PC-3 (cell line): ENCODE measurements at regions of chr12 and their contacts with region 1.

Region 1: DNA sequence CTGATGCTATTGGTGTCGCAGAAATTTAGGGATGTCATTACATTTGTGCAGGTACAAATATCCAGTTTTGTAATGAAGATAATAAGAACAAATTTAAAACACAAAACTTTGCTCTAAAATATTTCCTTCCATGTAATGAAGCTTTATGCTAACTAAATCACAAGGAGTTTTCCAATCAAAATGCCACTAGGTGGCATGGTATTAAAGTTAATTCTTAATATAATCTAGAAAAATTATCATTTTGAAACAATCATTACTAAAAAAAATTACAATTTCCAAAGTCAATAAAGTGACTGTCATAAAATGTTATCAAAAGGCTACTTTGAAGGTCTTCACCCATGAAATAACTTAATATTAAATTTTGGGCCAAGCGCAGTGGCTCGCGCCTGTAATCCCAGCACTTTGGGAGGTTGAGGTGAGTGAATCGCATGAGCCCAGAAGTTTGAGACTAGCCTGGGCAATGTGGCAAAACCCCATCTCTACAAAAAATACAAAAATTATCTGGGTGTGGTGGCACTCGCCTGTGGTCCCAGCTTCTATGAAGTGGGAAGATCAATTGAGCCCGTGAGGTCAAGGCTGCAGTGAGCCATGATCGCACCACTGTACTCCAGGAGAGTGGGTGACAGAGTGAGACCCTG is 77.4 kb downstream of the KIF21A start:
- DNase-seq: no peak
- ATAC-seq: no peak
- H3K4me3 ChIP-seq: no peak overlapping the region
- H3K27ac ChIP-seq: no peak overlapping the region
- H3K4me1 ChIP-seq: peaks cover 24% of the 10 kb centered on the region
- H3K27me3 ChIP-seq: no peaks in the 10 kb centered on the region
- CTCF ChIP-seq: peak; percentile 56

Region 2: DNA sequence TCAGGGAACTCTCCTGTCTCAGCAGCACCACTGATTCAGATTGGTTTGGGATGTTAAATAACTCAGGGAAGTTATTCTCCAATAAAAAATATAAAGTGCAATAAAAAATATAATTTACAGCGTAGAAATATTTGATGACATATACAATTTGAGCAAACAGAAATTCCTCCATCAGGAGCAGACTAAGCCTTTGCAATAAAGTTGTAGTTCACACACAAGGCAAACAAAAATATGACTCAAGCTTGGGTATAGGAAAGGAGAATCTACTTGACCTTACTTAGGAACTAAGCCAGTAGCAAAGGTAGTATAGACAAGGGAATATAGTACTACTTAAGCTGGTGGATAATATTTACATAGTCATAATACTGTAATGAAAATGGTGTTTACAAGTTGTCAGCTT is 186.6 kb before region 1 on chr12:
- CTCF ChIA-PET with region 1: no interaction called
- POLR2A ChIA-PET with region 1: no interaction called
- intact Hi-C with region 1: loop called (anchors 1 kb)
- DNase-seq: peak; percentile 84
- ATAC-seq: peak; percentile 96
- H3K4me3 ChIP-seq: no peak overlapping the region
- H3K27ac ChIP-seq: peak overlapping the region; percentile 92
- H3K4me1 ChIP-seq: peaks cover 28% of the 10 kb centered on the region
- H3K27me3 ChIP-seq: no peaks in the 10 kb centered on the region
- CTCF ChIP-seq: no peak

Region 3: DNA sequence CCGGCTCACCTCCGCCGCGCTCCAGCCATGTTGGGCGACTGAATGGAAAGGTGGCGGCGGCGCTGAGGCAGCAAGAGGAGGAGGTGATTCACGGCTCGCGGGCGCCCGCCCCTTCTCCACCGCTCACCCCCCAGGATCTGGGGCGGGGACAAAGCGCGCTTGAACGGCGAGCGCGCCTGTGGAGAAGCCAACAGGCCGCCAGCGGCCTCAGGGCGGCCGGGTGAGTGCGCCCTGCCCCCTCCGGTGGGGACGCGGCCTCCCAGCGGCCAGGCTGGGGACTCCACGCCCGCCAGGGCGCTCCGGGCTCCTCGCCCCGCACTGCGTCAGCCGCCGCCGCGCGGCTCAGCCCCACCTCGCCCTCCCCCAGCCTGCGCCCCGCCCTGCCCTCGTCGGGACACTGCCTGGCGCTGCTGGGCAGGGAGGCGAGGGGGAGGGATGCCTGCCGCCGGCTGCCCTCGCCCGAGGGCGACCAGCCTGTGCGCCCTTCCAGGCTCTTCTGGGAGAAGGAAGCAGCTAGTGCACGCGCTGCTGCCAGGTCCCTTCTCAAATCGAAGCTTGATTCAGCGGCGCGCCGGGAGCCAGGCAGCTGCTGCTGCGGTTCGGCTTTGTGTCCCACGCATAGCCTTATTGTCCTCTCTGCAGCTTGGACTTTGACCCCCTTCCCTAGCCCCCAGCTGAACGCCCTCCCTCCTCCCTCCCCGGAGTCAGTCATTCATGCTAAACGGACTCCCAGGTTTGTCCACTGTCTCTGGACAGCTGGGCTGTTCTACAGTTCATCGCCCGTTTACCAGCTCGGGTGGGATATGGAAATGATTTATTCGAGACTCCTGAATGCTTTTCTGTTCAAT is 77.8 kb after region 1 on chr12 and contains the start of gene KIF21A:
- CTCF ChIA-PET with region 1: interaction called, 3 read pairs
- POLR2A ChIA-PET with region 1: no interaction called
- intact Hi-C with region 1: loop called (anchors 1 kb)
- DNase-seq: peak; percentile 97
- ATAC-seq: peak; percentile 90
- H3K4me3 ChIP-seq: peak within 1 kb of the TSS; percentile 81
- H3K27ac ChIP-seq: peak within 1 kb of the TSS; percentile 61
- H3K4me1 ChIP-seq: peaks cover 22% of the 10 kb centered on the region
- H3K27me3 ChIP-seq: no peaks in the 10 kb centered on the region
- CTCF ChIP-seq: no peak
- total RNA-seq, gene KIF21A: 21.7 and 25.1 TPM in 2 replicates

Region 4: GRCh38 chr12:39503445-39503844 is 138.0 kb after region 1 on chr12:
- CTCF ChIA-PET with region 1: no interaction called
- POLR2A ChIA-PET with region 1: no interaction called
- intact Hi-C with region 1: loop called (anchors 5 kb)
- DNase-seq: peak; percentile 84
- ATAC-seq: peak; percentile 77
- H3K4me3 ChIP-seq: no peak overlapping the region
- H3K27ac ChIP-seq: no peak overlapping the region
- H3K4me1 ChIP-seq: peaks cover 32% of the 10 kb centered on the region
- H3K27me3 ChIP-seq: no peaks in the 10 kb centered on the region
- CTCF ChIP-seq: peak; percentile 66

Region 5: GRCh38 chr12:39538679-39539104 is 173.2 kb after region 1 on chr12:
- CTCF ChIA-PET with region 1: no interaction called
- POLR2A ChIA-PET with region 1: no interaction called
- intact Hi-C with region 1: loop called (anchors 10 kb)
- DNase-seq: no peak
- ATAC-seq: no peak
- H3K4me3 ChIP-seq: no peak overlapping the region
- H3K27ac ChIP-seq: no peak overlapping the region
- H3K4me1 ChIP-seq: 0 out of 2 replicates have a peak, but pooled peaks cover 4% of the 10 kb centered on the region
- H3K27me3 ChIP-seq: no peaks in the 10 kb centered on the region
- CTCF ChIP-seq: no peak

Region 6: DNA sequence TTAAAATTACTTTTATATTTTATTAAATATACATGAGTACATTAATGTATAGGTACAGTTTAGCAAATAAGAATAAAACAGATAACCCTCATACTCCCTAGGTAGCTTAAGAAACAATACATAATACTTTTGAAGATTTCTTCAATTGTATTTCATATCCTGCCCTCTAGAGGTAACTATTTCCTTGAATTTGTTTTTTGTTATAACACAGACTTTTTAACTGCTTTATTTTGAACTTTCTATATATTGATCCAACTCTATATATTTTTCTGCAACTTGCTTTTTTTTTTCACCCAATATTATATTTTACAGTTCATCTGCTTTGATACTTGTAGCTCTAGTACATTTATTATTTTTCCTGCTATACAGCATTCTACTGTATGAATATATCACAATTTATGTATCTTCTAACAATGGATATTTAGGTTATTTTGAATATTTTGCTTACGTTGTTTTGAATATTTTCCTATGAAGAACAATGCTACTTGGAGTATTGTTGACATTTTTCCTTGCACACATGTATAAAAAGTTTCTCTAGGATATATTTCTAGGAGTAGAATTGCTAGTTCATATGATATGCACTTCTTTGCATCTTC is 326.9 kb after region 1 on chr12:
- CTCF ChIA-PET with region 1: no interaction called
- POLR2A ChIA-PET with region 1: no interaction called
- intact Hi-C with region 1: loop called (anchors 5 kb)
- DNase-seq: peak; percentile 34
- ATAC-seq: no peak
- H3K4me3 ChIP-seq: no peak overlapping the region
- H3K27ac ChIP-seq: no peak overlapping the region
- H3K4me1 ChIP-seq: no peaks in the 10 kb centered on the region; the same call in 1 of the 2 replicates
- H3K27me3 ChIP-seq: peaks cover 4% of the 10 kb centered on the region; the same call in 1 of the 2 replicates
- CTCF ChIP-seq: peak; percentile 62